Left ventricle myocardium inferior (tissue), 1 donor: ENCODE measurements at regions of chr11 and their contacts with region 1.

Region 1: DNA sequence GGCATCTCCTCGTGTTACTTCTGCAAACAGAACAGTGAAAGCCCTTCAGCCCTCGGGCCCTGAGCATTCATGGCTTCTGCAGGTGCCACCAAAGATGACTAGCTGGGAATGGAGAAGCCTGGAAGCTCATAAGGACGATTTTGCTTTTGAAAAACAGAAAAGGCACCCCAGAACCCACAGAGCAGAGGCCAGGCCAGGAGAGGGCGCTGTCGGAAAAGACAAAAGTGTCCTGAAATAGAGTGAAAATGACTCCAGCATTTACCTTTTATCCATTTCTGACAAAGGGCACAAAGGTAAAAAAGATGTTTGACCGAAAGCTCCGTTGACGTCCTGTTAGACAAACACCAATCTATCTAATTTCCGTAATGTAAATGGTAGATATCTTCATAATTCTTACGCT is 37.6 kb downstream of the ZNF195 start:
- DNase-seq: peak; percentile 31
- H3K4me3 ChIP-seq: no peak overlapping the region
- H3K27ac ChIP-seq: no peak overlapping the region
- H3K4me1 ChIP-seq: no peaks in the 10 kb centered on the region
- H3K27me3 ChIP-seq: peaks cover 39% of the 10 kb centered on the region
- CTCF ChIP-seq: peak; percentile 66

Region 2: GRCh38 chr11:3037040-3037944 is 304.0 kb before region 1 on chr11:
- intact Hi-C with region 1: no loop called
- DNase-seq: peak; percentile 80
- H3K4me3 ChIP-seq: no peak overlapping the region
- H3K27ac ChIP-seq: peak overlapping the region; percentile 26
- H3K4me1 ChIP-seq: peaks cover 33% of the 10 kb centered on the region
- H3K27me3 ChIP-seq: no peaks in the 10 kb centered on the region
- CTCF ChIP-seq: peak; percentile 86

Region 3: GRCh38 chr11:3412837-3413236 is 71.5 kb after region 1 on chr11:
- intact Hi-C with region 1: loop called (anchors 10 kb)
- DNase-seq: no peak
- H3K4me3 ChIP-seq: no peak overlapping the region
- H3K27ac ChIP-seq: no peak overlapping the region
- H3K4me1 ChIP-seq: no peaks in the 10 kb centered on the region
- H3K27me3 ChIP-seq: no peaks in the 10 kb centered on the region
- CTCF ChIP-seq: no peak